Tibial artery (tissue), 4 donors: ENCODE measurements at regions of chr5 and their contacts with region 1.

Region 1: GRCh38 chr5:89452081-89452480 is 569.1 kb upstream of the MEF2C start:
- DNase-seq: no peak
- H3K4me3 ChIP-seq: no peak overlapping the region
- H3K27ac ChIP-seq: no peak overlapping the region
- H3K4me1 ChIP-seq: peaks cover 0 to 3% (median 0%) of the 10 kb centered on the region in 4 donors
- H3K27me3 ChIP-seq: no peaks in the 10 kb centered on the region
- CTCF ChIP-seq: no peak

Region 2: DNA sequence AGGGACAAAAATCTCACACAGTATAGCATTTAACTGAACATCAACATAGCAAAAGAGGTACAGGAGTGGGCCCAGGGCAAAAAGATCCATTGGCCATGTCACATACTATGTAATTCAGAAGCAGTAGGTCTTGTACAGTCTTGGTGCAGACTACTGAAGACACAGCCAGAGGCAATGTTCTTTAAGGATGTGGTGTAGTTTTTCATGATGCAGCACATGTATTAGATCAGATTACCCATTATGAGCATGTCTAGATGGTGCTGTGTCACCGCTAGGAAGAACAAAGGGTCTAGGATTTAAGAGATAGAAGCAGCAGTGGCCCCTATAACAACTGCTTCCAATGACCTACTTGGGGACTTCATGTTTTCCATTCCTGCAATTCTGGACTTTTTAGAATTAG is 41.3 kb after region 1 on chr5:
- intact Hi-C with region 1: loop called (anchors 1 kb)
- DNase-seq: no peak
- H3K4me3 ChIP-seq: no peak overlapping the region
- H3K27ac ChIP-seq: no peak overlapping the region
- H3K4me1 ChIP-seq: no peaks in the 10 kb centered on the region
- H3K27me3 ChIP-seq: no peaks in the 10 kb centered on the region
- CTCF ChIP-seq: no peak